Dorsolateral prefrontal cortex (tissue), 120 donors: ENCODE measurements at regions of chr1 and their contacts with region 1.

Region 1: DNA sequence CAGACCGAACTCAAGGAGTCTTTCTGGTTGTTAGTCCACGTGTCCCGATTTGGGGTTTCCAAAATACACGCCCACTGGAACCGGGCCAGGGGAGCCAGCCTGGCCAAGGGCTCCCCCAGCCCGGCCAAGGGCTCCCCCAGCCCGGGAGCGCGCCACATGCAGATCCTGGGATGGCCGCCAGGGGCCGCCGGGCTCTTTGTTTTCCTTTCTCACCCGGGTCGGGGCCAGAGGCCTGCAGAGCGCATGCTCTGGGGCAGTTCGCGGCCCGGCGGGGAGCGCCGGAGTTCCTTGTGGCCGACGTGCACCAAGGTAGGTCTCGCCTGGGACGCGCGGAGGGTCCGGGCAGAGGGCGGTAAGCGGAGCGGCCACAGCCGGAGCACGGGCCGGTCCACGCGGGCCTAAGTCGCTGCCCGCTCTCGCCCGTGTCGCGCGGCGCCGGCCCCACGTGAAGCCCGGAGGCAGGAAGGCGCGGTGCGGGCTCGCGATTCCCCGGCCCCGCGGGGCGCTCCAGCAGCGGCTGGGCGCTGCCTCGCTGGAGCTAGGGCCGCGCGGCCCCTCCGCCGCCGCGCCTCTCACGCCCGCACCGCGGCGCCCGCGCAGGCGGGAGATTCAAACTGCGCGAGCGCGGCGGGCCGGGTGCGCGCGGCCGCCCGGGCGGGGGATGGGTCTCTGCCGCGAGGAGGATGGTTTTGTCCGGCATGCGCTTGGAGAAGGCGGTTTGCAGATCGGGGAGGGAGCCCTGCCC is 12.3 kb downstream of the RCC1 start:
- DNase-seq: peak; percentile 81 to 90 (median 85)
- H3K4me3 ChIP-seq: peak overlapping the region; percentile 39 to 88 (median 72)
- H3K27ac ChIP-seq: peak overlapping the region in 52 of 59 donors; percentile 4 to 94 (median 80)
- H3K27me3 ChIP-seq: no peaks in the 10 kb centered on the region
- CTCF ChIP-seq: peak; percentile 89 to 100 (median 99)

Region 2: DNA sequence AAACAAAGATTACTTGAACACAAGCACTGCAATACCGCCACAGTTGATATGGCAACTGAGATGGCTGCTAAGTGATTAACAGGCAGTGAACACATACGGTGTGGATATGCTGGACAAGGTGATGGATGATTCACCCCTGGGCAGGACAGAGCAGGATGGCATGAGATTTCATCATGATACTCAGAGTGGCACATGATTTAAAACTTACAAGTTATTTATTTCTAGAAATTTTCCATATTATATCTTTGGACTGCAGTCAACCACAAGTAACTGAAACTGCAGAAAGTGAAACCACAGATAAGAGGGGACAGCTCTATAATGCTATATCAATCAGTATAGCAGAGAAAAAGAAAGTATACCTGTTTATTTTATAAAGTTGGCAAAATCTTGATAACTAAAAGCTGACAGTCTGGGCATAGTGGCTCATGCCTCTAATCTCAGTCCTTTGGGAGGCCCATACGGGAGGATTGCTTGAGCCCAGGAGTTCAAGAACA is 100.7 kb before region 1 on chr1:
- intact Hi-C with region 1: loop called in 1 of 2 experiments (anchors 10 kb)
- DNase-seq: no peak
- H3K4me3 ChIP-seq: no peak overlapping the region
- H3K27ac ChIP-seq: no peak overlapping the region
- H3K27me3 ChIP-seq: no peaks in the 10 kb centered on the region
- CTCF ChIP-seq: no peak

Region 3: GRCh38 chr1:28456078-28456477 is 62.1 kb before region 1 on chr1:
- intact Hi-C with region 1: no loop called
- DNase-seq: no peak
- H3K4me3 ChIP-seq: no peak overlapping the region
- H3K27ac ChIP-seq: peak overlapping the region in 2 of 59 donors; percentile 12 to 15
- H3K27me3 ChIP-seq: no peaks in the 10 kb centered on the region
- CTCF ChIP-seq: no peak

Region 4: DNA sequence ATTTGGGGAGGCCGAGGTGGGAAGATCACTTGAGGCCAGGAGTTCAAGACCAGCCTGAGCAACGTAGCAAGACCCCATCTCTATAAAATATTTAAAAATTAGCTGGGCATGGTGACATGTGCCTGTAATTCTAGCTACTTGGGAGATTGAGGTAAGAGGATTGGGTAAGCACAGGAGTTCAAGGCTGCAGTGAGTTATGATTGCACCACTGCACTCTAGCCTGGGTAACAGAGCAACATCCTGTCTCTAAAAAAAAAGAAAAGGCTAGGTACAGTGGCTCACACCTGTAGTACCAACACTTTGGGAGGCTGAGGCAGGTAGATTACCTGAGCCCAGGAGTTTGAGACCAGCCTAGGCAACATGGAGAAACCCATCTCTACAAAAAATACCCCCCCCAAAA is 48.0 kb before region 1 on chr1:
- intact Hi-C with region 1: no loop called
- DNase-seq: no peak
- H3K4me3 ChIP-seq: no peak overlapping the region
- H3K27ac ChIP-seq: peak overlapping the region in 21 of 59 donors; percentile 3 to 75 (median 51)
- H3K27me3 ChIP-seq: no peaks in the 10 kb centered on the region
- CTCF ChIP-seq: no peak

Region 5: GRCh38 chr1:28552758-28553663 is 34.8 kb after region 1 on chr1 and contains the start of gene TRNAU1AP:
- intact Hi-C with region 1: loop called (anchors 1 to 5 kb)
- DNase-seq: peak; percentile 85 to 95 (median 92)
- H3K4me3 ChIP-seq: peak within 1 kb of the TSS; percentile 68 to 98 (median 91)
- H3K27ac ChIP-seq: peak within 1 kb of the TSS; percentile 56 to 98 (median 91)
- H3K27me3 ChIP-seq: no peaks in the 10 kb centered on the region
- CTCF ChIP-seq: peak in 34 of 56 donors; percentile 4 to 60 (median 30)
- total RNA-seq, gene TRNAU1AP: 20.5 to 49.2 (median 32.7) TPM

Region 6: GRCh38 chr1:28581536-28582247 is 63.5 kb after region 1 on chr1:
- intact Hi-C with region 1: loop called in 1 of 2 experiments (anchors 5 kb)
- DNase-seq: peak; percentile 94 to 98 (median 97)
- H3K4me3 ChIP-seq: peak overlapping the region; percentile 71 to 100 (median 94)
- H3K27ac ChIP-seq: peak overlapping the region; percentile 14 to 97 (median 86)
- H3K27me3 ChIP-seq: no peaks in the 10 kb centered on the region
- CTCF ChIP-seq: peak in 45 of 56 donors; percentile 8 to 63 (median 38)

Region 7: DNA sequence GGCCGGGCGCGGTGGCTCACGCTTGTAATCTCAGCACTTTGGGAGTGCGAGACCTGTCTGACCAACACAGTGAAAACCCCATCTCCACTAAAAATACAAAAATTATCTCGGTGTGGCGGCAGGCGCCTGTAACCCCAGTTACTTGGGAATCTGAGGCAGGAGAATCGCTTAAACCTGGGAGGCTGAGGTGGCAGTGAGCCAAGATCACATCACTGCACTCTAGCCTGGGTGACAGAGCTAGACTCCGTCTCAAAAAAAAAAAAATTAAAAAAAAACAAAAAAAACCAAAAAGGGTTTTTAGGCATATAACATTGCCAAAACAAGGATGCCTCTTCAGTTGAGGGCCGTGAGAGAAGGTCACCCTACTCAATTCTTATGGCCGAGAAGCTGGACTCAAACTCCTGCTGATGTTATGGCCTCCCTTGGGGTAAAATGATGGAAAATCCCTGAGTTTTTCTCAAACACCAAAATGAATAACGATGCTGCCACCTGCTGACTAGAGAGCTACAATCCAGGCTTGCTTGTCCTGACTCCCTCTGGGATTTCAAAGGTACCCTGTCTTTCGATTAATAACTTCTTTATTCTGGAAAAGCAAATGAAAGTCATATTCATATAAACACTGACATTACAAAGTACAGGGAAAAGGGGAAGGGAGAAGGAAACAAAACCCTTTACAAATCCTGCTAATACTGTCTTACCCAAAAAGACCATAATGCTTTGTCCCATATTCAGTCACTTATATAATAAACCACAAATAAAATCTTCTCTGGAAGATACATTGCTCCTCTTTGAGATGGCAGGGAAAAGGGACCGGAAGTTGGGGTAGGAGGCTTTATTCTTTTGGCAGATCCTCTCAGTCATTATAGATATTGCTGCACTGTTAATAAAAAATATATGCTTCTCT is 84.6 kb after region 1 on chr1:
- intact Hi-C with region 1: loop called (anchors 1 to 2 kb)
- DNase-seq: peak in 6 of 10 donors; percentile 52 to 87 (median 60)
- H3K4me3 ChIP-seq: peak overlapping the region in 4 of 59 donors; percentile 7 to 14 (median 12)
- H3K27ac ChIP-seq: peak overlapping the region in 58 of 59 donors; percentile 2 to 96 (median 70)
- H3K27me3 ChIP-seq: no peaks in the 10 kb centered on the region
- CTCF ChIP-seq: peak; percentile 38 to 95 (median 83)